Caco-2 (cell line): ENCODE measurements at regions of chr2 and their contacts with region 1.

Region 1: DNA sequence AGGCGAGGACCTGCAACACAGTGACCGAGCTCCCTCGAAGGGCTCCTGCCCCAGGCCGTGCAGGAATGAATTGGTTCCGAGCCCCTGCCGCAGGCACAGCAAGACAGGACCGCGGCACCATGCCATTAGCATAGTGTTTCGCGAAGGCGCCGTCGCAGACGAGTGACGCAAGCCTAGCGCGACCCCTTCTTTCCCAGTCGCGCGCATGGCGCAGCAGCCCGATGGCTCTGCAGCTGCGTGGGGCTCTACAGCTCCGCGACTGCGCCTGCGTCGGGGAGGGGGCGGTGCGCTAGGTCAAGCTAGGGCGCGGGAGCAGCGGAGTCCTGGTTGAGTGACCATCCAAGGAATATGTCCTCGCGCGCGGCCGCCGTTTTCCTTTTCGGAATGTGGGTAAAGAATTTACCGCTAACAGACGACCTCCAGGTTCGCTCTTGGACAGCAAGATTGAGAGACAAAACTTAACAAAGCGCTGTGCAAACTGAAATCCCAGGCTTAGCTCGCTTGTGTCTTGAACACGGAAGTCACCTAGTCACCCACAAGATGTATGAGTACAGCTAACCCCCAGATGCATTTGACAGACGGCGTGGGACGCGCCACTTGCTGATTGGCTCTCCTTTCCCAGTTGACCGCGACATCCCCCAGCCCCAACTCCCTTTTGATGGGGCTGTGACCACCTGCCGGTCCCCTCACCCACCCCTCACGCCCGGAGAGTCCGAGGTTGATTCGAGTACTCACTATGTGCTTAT is at the start of gene TRMT61B:
- DNase-seq: peak; percentile 97 to 98
- H3K4me3 ChIP-seq: peak within 1 kb of the TSS; percentile 78
- H3K4me3 Mint-ChIP-seq: peak within 1 kb of the TSS; percentile 90
- H3K27ac Mint-ChIP-seq: peak within 1 kb of the TSS; percentile 93
- H3K4me1 ChIP-seq: 0 out of 2 replicates have a peak, but pooled peaks cover 7% of the 10 kb centered on the region
- H3K4me1 Mint-ChIP-seq: peaks cover 7% of the 10 kb centered on the region
- H3K27me3 ChIP-seq: no peaks in the 10 kb centered on the region
- H3K27me3 Mint-ChIP-seq: peaks cover under 1% of the 10 kb centered on the region
- CTCF ChIP-seq: no peak
- total RNA-seq, gene TRMT61B: 19.9 and 20.0 TPM in 2 replicates

Region 2: DNA sequence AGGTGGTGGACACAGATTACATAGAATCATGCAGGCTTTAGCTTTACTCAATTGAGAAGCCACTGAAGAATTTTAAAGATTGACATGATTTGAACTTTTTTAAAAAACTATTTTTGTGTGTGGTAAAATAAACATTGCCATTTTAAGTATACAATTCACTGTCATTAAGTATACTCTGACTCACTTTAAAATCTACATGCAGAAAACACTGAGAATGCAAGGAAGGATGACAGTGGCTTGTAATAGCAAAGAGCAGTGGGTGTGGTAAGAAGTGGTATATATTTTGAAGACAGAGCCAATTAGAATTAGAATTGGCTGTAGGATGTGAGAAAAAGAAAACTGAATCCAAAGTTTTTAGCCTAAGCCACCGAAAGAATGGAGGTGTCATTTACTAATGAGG is 15.1 kb before region 1 on chr2:
- CTCF ChIA-PET with region 1: no interaction called
- POLR2A ChIA-PET with region 1: interaction called, 11 read pairs
- intact Hi-C with region 1: no loop called
- DNase-seq: no peak
- H3K4me3 ChIP-seq: no peak overlapping the region
- H3K4me3 Mint-ChIP-seq: no peak overlapping the region
- H3K27ac Mint-ChIP-seq: no peak overlapping the region
- H3K4me1 ChIP-seq: no peaks in the 10 kb centered on the region
- H3K4me1 Mint-ChIP-seq: no peaks in the 10 kb centered on the region
- H3K27me3 ChIP-seq: no peaks in the 10 kb centered on the region
- H3K27me3 Mint-ChIP-seq: no peaks in the 10 kb centered on the region
- CTCF ChIP-seq: no peak

Region 3: DNA sequence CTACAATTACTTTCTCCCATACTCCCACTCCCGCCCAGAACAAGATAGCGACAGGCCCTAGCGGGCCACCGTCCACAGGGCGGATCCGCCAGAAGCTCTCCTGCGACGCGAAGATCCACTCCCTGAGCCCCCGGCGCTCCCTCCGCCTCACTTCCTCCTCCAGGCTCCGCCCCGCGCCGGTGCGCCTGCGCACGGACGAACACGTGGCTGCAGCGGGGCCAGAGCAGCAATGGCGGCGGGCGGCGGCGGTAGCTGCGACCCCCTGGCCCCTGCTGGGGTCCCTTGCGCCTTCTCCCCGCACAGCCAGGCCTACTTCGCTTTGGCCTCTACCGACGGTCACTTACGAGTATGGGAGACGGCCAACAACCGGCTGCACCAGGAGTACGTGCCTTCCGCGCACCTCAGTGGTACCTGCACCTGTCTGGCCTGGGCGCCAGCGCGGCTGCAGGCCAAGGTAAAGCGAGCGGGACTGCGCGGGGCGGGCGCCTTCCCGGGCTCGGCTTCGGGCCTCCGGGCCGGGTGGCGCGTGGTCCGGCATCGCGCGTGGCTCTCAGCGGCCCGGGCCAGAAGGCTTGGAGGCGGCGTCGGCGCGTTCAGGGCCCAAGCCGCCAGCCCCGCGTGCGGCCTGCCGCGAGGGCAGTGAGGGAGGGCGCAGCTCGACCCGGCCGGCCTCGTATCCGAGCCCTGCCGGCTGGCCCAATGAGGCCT is 24.3 kb after region 1 on chr2 and contains the start of gene WDR43:
- CTCF ChIA-PET with region 1: interaction called, 4 read pairs
- POLR2A ChIA-PET with region 1: interaction called, 46 read pairs
- intact Hi-C with region 1: loop called (anchors 1 kb)
- DNase-seq: peak; percentile 99
- H3K4me3 ChIP-seq: peak within 1 kb of the TSS; percentile 99
- H3K4me3 Mint-ChIP-seq: peak within 1 kb of the TSS; percentile 100
- H3K27ac Mint-ChIP-seq: peak within 1 kb of the TSS; percentile 99
- H3K4me1 ChIP-seq: peaks cover 13% of the 10 kb centered on the region
- H3K4me1 Mint-ChIP-seq: peaks cover 21% of the 10 kb centered on the region
- H3K27me3 ChIP-seq: no peaks in the 10 kb centered on the region
- H3K27me3 Mint-ChIP-seq: no peaks in the 10 kb centered on the region
- CTCF ChIP-seq: no peak
- total RNA-seq, gene WDR43: 117 and 133 TPM in 2 replicates

Region 4: GRCh38 chr2:30455114-30455738 is 1584.9 kb after region 1 on chr2:
- CTCF ChIA-PET with region 1: no interaction called
- POLR2A ChIA-PET with region 1: interaction called, 12 read pairs
- intact Hi-C with region 1: no loop called
- DNase-seq: peak in 1 of 2 experiments; percentile 50
- H3K4me3 ChIP-seq: no peak overlapping the region
- H3K4me3 Mint-ChIP-seq: no peak overlapping the region
- H3K27ac Mint-ChIP-seq: peak overlapping the region; percentile 45
- H3K4me1 ChIP-seq: peaks cover 43% of the 10 kb centered on the region
- H3K4me1 Mint-ChIP-seq: peaks cover 42% of the 10 kb centered on the region
- H3K27me3 ChIP-seq: no peaks in the 10 kb centered on the region
- H3K27me3 Mint-ChIP-seq: no peaks in the 10 kb centered on the region
- CTCF ChIP-seq: no peak